ENCODE measurements at regions of chr21 and their contacts with region 1.

Region 1: DNA sequence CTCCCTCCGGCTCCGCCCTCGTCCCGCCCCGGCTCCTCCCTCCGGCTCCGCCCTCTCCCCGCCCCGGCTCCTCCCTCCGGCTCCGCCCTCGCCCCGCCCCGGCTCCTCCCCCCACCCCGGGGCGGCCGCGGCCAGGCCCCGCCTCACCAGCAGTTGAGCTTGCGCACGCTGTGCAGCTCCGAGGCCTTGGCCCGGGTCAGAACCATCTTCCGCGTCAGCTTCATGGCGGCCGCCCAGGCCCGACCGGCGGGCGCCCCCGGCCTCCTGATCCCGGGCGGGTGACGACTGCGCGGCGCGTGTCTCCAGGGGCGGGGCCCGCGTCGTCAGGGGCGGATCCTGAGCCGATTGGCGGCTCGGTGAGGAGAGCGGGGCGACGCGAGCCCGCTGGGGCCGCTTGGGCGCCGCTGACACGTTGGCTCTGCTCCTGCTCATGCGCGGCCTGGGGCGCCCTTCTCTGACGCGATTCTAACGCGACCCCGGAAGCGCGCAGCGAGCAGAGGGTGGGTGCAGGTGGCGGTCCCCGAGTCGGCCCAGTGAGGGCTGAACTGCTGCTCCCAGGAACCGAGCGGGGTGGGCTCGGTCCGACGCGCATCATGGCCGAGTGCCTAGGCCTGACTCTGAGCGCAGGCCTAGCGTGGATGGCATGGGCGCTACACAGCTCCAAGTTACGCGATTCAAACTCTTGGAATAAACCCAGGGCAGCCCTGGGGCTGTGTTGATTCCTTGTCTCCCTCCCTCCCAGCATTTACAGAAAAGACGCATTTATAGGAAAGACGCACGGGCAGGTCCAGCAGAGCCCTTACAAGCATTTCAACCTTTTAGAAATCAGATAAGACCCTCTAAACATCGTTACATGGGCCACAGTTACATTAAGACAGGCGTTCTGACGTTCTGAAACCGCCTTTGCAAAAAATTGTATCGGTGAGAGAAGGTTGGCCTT is at the start of gene CFAP410:
- DNase-seq: peak; percentile 97
- ATAC-seq: peak; percentile 97
- H3K4me3 Mint-ChIP-seq: peak within 1 kb of the TSS; percentile 96
- H3K27ac Mint-ChIP-seq: peak within 1 kb of the TSS; percentile 98
- H3K4me1 Mint-ChIP-seq: peaks cover 18% of the 10 kb centered on the region
- H3K27me3 Mint-ChIP-seq: no peaks in the 10 kb centered on the region
- total RNA-seq, gene CFAP410: 7.3 to 11.4 TPM

Region 2: DNA sequence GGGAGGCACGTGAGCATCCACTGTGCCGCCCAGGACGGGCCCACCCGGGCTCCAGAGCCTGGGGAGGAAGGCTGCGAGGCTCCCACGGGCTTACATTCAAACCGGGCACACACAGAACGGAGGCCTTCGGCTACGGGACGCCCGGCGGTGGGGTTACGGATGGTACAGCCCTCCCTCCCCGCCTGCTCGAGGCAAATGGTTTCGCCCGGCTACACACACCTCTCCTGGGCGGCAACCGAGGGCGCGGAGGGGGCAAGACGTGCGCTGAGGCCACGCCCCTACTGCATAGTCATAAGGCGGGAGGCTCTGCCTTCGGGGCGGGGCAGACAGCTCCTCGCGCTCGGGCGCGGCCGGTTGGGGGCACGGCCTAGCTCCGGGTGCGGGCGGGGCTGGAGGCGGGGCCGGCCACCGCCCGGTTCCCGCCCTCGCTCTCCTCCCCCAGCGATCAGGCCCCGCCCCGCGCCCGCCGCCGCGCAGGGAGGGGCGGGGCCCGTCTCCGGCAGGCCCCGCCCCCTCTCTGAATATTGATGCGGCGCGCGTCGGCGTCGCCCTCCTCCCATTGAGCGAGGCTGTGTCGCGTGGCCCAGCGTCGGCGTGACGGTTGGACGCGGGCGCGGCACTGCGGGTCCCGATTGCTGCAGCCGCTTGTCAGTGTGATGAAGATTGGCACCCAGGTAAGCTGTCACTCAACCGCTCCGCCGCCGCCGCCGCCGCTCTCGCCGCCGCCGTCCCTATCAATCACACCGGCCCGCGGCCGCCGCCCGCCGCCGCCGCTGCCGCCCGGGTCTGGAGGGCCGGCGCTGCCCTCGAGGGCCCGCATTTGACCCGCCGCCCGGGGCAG is 1365.0 kb before region 1 on chr21 and contains the start of gene PKNOX1:
- CTCF ChIA-PET with region 1: no interaction called
- POLR2A ChIA-PET with region 1: no interaction called
- intact Hi-C with region 1: loop called (anchors 2 to 10 kb)
- DNase-seq: peak; percentile 100
- ATAC-seq: peak; percentile 89
- H3K4me3 Mint-ChIP-seq: peak within 1 kb of the TSS; percentile 85
- H3K27ac Mint-ChIP-seq: peak within 1 kb of the TSS; percentile 94
- H3K4me1 Mint-ChIP-seq: peaks cover 30% of the 10 kb centered on the region
- H3K27me3 Mint-ChIP-seq: no peaks in the 10 kb centered on the region
- total RNA-seq, gene PKNOX1: 13.4 to 14.8 TPM

Region 3: DNA sequence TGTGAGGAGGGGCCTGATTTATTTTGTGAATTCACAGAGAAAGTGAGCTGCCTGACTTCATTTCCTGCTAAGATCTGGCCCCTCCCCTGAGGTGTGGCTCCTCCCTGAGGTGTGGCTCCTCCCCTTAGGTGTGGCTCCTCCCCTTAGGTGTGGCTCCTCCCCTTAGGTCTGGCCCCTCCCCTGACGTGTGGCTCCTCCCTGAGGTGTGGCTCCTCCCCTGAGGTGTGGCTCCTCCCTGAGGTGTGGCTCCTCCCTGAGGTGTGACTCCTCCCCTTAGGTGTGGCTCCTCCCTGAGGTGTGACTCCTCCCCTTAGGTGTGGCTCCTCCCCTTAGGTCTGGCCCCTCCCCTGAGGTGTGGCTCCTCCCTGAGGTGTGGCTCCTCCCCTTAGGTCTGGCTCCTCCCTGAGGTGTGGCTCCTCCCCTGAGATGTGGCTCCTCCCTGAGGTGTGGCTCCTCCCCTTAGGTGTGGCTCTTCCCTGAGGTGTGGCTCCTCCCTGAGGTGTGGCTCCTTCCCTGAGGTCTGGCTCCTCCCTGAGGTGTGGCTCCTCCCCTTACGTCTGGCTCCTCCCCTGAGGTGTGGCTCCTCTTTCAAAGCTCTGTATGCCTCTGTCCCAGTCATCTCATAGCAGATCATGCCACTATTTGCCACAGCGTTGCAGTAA is 89.2 kb after region 1 on chr21:
- CTCF ChIA-PET with region 1: no interaction called
- POLR2A ChIA-PET with region 1: interaction called, 3 read pairs
- intact Hi-C with region 1: loop called in 1 of 2 experiments (anchors 1 kb)
- DNase-seq: peak; percentile 71
- ATAC-seq: peak; percentile 77
- H3K4me3 Mint-ChIP-seq: no peak overlapping the region
- H3K27ac Mint-ChIP-seq: no peak overlapping the region
- H3K4me1 Mint-ChIP-seq: no peaks in the 10 kb centered on the region
- H3K27me3 Mint-ChIP-seq: no peaks in the 10 kb centered on the region

Region 4: DNA sequence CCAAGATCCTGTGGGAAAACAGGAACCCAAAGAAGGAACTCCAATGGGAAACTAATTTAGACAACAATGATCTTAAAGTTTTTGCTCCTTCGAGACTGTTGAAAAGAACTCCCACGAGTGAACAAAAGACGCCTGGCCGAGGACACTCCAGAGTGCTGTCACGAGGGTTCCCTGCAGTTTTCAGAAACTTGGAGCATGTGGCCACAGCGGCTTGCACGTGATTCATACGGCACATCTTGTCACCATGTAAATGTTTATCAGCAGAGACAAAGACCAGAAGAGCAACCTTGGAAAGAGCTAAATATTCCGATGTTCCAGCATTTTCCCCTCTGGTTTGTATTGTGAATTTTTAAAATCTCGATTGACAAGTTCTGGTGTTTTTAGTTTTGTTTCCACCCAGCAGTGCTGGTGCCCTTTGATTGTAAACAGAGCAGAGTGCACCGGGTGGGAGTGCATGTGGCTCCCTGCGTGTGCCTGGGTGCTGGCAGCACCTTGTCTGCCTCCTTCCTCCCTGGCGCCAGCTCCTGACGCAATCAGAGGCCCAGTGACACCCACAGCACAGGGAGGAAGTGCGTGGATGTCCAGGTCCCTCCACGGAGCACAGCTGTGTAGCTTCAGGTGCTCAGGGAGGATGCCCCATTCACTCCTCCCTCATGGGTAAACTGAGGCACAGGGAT is 139.0 kb after region 1 on chr21:
- CTCF ChIA-PET with region 1: no interaction called
- POLR2A ChIA-PET with region 1: no interaction called
- intact Hi-C with region 1: loop called in 1 of 2 experiments (anchors 2 kb)
- DNase-seq: no peak
- ATAC-seq: no peak
- H3K4me3 Mint-ChIP-seq: no peak overlapping the region
- H3K27ac Mint-ChIP-seq: no peak overlapping the region
- H3K4me1 Mint-ChIP-seq: peaks cover 3% of the 10 kb centered on the region
- H3K27me3 Mint-ChIP-seq: no peaks in the 10 kb centered on the region

Region 5: GRCh38 chr21:44761011-44761729 is 421.9 kb after region 1 on chr21:
- CTCF ChIA-PET with region 1: no interaction called
- POLR2A ChIA-PET with region 1: no interaction called
- intact Hi-C with region 1: no loop called
- DNase-seq: peak; percentile 53
- ATAC-seq: no peak
- H3K4me3 Mint-ChIP-seq: no peak overlapping the region
- H3K27ac Mint-ChIP-seq: peak overlapping the region; percentile 3
- H3K4me1 Mint-ChIP-seq: peaks cover 12% of the 10 kb centered on the region
- H3K27me3 Mint-ChIP-seq: no peaks in the 10 kb centered on the region

Region 6: DNA sequence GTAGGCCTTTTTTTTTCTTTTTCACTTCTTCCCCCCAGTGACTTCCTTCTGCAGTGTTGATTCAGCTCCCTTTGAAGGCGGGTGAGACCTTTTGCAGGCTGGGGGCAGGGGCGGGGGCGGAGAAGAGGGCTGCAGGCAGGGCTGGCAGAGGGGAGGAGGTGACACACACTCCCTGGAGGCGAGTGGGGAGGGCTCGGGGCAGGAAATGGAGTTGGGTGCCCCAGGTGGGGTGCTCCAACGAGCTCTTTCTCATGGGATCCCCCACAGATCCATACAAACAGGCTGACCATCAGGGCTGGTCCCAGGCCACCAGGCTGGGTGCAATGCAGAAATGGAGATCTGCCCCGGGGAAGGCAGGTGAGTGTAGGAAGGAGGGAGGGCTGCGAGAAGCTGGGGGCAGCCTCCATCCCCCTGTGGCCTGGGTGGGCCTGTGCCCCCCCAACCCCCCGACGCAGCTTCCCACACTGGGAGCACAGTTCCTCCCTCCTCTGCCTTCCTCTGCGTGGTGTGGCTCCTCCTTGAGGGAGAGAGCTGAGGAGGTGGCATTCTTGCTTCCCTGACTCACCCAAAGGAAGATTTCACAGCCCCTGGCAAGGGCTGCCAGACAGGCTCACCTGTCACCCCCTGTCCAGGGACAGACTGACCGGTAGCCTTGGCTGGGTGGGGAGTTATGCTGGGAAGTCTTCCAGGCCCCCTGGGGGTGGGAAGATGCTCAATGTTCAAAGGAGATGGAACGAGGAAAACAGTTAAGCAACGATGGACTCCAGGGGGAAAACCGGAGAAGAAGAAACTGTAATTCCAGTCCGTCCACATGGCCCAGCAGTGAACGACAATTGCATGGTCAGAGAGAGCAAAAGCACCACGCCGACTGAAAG is 588.6 kb after region 1 on chr21:
- CTCF ChIA-PET with region 1: no interaction called
- POLR2A ChIA-PET with region 1: no interaction called
- intact Hi-C with region 1: loop called in 1 of 2 experiments (anchors 5 kb)
- DNase-seq: peak; percentile 97
- ATAC-seq: peak; percentile 74
- H3K4me3 Mint-ChIP-seq: peak overlapping the region; percentile 90
- H3K27ac Mint-ChIP-seq: peak overlapping the region; percentile 94
- H3K4me1 Mint-ChIP-seq: peaks cover 80% of the 10 kb centered on the region
- H3K27me3 Mint-ChIP-seq: no peaks in the 10 kb centered on the region